AG04449 (cell line): ENCODE measurements at regions of chr17 and their contacts with region 1.

Region 1: GRCh38 chr17:47840740-47841603 is at the start of gene SCRN2:
- DNase-seq: no peak
- H3K4me3 ChIP-seq: peak within 1 kb of the TSS; percentile 69
- CTCF ChIP-seq: peak; percentile 95

Region 2: DNA sequence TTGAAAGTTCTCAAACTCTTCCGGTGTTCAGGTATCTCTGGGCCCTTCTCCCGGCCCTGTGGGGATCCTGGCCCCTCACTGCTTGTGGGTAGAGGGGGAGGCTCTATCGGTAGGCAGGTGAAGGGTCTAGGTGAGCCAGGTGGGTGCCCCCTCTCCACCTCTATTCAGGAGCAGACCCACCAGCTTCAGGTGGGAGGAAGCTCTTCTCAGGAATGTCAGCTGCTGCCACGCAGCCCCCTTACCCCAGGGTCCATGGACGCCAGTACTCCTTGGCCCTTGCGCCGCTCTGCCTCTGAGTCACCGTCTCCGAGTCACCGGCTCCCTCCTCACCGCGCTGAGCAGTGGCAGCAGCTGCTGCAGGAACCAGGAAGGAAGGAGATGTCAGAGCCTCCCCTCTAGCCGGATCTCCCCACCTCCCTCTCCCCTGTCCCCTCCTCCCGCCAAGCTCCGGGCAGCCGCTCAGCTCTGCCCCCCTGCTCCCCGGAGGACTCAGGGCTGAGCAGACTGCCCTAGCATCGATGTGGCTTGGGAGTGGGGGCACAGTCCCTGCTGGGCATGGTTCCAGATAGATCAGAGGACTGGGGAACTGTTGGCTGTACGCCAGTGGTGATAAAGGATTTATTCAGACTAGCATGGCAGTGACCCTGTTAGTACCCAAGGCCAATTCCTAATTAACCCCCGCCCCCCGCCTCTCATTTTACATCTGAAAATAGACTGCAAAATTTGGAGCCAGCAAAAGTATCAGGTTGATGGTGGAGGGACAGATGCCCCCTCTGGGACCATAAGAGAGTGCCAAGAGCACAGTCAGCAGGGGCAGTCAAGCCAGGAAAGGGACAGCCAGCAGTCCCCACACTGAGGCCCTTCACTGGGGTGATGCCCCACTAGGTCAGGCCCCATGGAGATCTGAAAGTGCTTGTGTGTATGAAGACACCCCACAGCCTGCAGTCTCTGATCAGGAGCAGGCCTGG is 19.3 kb before region 1 on chr17 and contains the start of gene OSBPL7:
- CTCF ChIA-PET with region 1: interaction called, 10 read pairs
- POLR2A ChIA-PET with region 1: no interaction called
- DNase-seq: peak; percentile 36
- H3K4me3 ChIP-seq: peak within 1 kb of the TSS; percentile 87
- CTCF ChIP-seq: peak; percentile 48

Region 3: DNA sequence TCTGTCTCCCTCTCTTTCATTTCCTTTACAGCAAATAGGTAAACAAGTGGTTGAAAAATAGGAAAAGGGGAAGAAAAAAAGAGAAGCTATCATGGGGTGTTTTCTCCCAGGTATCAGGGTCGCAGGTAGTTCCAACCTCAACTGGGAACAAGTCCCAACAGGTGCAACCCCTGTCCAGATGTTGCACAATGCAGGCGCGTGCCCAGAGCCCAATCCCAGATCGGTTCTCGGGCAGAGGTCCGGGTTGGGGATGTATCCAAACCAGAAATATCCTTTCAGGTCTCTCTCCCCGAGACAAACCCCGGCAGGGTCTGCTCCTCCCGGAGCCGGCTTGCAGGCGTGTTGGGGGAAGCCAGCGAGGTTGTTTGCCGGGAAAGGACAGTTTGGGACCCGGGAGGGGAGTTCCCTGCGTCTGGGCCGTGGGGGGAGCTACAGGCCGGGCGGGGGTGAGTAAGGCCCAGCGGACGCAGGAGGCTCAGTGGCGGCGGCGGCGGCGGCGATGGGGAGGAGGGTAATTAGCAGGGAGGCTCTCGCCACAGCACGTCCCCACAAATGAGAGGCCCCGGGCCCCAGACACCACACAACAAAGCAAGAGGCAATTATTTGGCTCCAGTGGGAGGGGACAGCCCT is 31.2 kb after region 1 on chr17:
- CTCF ChIA-PET with region 1: interaction called, 22 read pairs
- POLR2A ChIA-PET with region 1: no interaction called
- DNase-seq: no peak
- H3K4me3 ChIP-seq: no peak overlapping the region
- CTCF ChIP-seq: no peak

Region 4: GRCh38 chr17:47895856-47896671 is 55.1 kb after region 1 on chr17 and contains the start of gene SP2:
- CTCF ChIA-PET with region 1: interaction called, 1,547 read pairs
- POLR2A ChIA-PET with region 1: interaction called, 6 read pairs
- DNase-seq: peak; percentile 100
- H3K4me3 ChIP-seq: peak within 1 kb of the TSS; percentile 96
- CTCF ChIP-seq: peak; percentile 10

Region 5: GRCh38 chr17:47929218-47930000 is 88.4 kb after region 1 on chr17:
- CTCF ChIA-PET with region 1: no interaction called
- POLR2A ChIA-PET with region 1: no interaction called
- DNase-seq: no peak
- H3K4me3 ChIP-seq: no peak overlapping the region
- CTCF ChIP-seq: no peak

Region 6: DNA sequence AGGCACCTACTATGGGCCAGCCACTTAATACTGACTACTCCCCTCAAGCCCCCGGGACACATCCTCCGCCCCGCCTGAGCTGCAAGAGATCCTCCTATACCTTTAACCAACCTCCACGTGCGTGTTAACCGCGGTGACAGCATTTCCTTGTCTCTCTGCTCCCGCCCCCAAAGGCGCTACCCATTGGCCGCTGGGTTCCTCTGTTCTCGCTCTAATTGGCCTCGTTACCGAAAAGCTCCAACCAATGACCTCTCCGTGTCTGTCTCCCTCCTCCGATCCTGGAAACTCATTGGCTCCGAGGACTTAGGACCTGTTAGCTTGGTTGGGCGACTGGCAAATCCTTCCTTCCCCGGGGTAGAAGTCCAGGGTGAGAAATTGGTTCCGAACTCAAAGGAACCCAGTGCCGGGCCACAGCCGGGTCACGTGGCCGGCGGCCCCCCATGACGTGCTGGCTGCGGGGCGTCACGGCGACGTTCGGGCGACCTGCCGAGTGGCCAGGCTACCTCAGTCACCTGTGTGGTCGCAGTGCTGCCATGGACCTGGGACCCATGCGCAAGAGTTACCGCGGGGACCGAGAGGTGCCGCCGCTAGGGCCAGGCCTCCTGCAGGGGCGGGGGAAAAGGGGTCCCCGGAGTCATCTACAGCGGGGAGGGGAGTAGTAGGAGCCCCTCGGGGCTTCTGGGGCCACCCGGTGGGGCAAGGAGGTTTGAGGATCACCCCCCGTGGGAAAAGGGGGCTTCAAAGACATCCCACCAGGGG is 100.4 kb after region 1 on chr17 and contains the start of gene PNPO:
- CTCF ChIA-PET with region 1: interaction called, 43 read pairs
- POLR2A ChIA-PET with region 1: no interaction called
- DNase-seq: peak; percentile 86
- H3K4me3 ChIP-seq: peak within 1 kb of the TSS; percentile 78
- CTCF ChIP-seq: peak; percentile 10

Region 7: GRCh38 chr17:47970704-47971463 is 129.9 kb after region 1 on chr17 and contains the start of gene CDK5RAP3:
- CTCF ChIA-PET with region 1: interaction called, 14 read pairs
- POLR2A ChIA-PET with region 1: no interaction called
- DNase-seq: peak; percentile 89
- H3K4me3 ChIP-seq: peak within 1 kb of the TSS; percentile 98
- CTCF ChIP-seq: peak; percentile 100